Dorsolateral prefrontal cortex (tissue), 120 donors: ENCODE measurements at regions of chr1 and their contacts with region 1.

Region 1: GRCh38 chr1:173202430-173203145 is 4.5 kb downstream of the TNFSF4 start:
- DNase-seq: no peak
- H3K4me3 ChIP-seq: no peak overlapping the region
- H3K27ac ChIP-seq: no peak overlapping the region
- H3K27me3 ChIP-seq: no peaks in the 10 kb centered on the region
- CTCF ChIP-seq: peak; percentile 15 to 75 (median 59)

Region 2: GRCh38 chr1:172745014-172745413 is 457.6 kb before region 1 on chr1:
- intact Hi-C with region 1: loop called (anchors 2 to 10 kb)
- DNase-seq: no peak
- H3K4me3 ChIP-seq: no peak overlapping the region
- H3K27ac ChIP-seq: no peak overlapping the region
- H3K27me3 ChIP-seq: no peaks in the 10 kb centered on the region
- CTCF ChIP-seq: peak in 54 of 56 donors; percentile 21 to 67 (median 43)

Region 3: GRCh38 chr1:172826096-172826743 is 376.4 kb before region 1 on chr1:
- intact Hi-C with region 1: loop called (anchors 5 to 10 kb)
- DNase-seq: no peak
- H3K4me3 ChIP-seq: peak overlapping the region in 43 of 59 donors; percentile 0 to 56 (median 26)
- H3K27ac ChIP-seq: peak overlapping the region in 14 of 59 donors; percentile 6 to 54 (median 35)
- H3K27me3 ChIP-seq: no peaks in the 10 kb centered on the region
- CTCF ChIP-seq: peak; percentile 25 to 75 (median 59)

Region 4: GRCh38 chr1:173097001-173097400 is 105.6 kb before region 1 on chr1:
- intact Hi-C with region 1: no loop called
- DNase-seq: no peak
- H3K4me3 ChIP-seq: no peak overlapping the region
- H3K27ac ChIP-seq: no peak overlapping the region
- H3K27me3 ChIP-seq: no peaks in the 10 kb centered on the region
- CTCF ChIP-seq: no peak

Region 5: DNA sequence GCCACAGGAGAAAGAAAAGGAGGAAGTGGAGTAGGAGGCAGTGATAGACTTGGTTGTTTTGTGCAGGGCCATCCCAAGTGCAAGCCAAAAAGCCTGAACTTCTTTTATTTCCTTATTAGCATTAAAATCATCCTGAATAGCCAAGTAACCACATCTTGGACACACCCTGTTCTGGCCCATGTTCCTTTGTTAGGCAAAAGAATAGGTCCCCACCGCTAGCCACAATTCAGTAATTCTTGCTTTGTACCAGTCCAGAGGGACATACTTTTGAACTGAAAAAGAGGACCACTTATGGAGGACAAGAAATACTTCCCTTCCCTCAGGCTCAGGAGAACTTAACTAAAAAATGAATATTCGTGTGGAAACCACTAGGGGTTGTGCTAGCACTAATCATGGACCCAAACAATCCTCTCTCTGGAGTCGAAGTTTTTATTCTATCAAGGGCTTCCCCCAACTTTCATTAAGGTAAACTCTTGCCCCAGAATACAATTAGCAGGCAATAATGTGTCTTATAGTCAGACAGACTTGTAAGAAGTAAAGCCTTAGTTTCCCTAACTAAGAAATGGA is 14.8 kb before region 1 on chr1:
- intact Hi-C with region 1: loop called in 1 of 2 experiments (anchors 1 kb)
- DNase-seq: no peak
- H3K4me3 ChIP-seq: no peak overlapping the region
- H3K27ac ChIP-seq: no peak overlapping the region
- H3K27me3 ChIP-seq: no peaks in the 10 kb centered on the region
- CTCF ChIP-seq: no peak